Gastrocnemius medialis (tissue), 4 donors: ENCODE measurements at regions of chr2 and their contacts with region 1.

Region 1: GRCh38 chr2:199955339-199956261 is at the starts of genes MAIP1 and TYW5:
- DNase-seq: peak; percentile 68 to 72
- ATAC-seq: peak; percentile 98
- H3K4me3 ChIP-seq: peak within 1 kb of the TSS; percentile 83 to 94 (median 90)
- H3K27ac ChIP-seq: peak within 1 kb of the TSS; percentile 86 to 94 (median 90)
- H3K4me1 ChIP-seq: peaks cover 33% of the 10 kb centered on the region in 2 donors
- H3K27me3 ChIP-seq: no peaks in the 10 kb centered on the region
- CTCF ChIP-seq: peak in 3 of 5 experiments; percentile 34 to 43 (median 34)
- POLR2A ChIP-seq: peak; percentile 24 to 56
- total RNA-seq, gene MAIP1: 21.9 to 40.2 (median 26.6) TPM
- total RNA-seq, gene TYW5: 1.7 to 4.5 (median 3.8) TPM

Region 2: GRCh38 chr2:199911052-199911876 is 44.3 kb before region 1 on chr2 and contains the start of gene C2orf69:
- in situ Hi-C with region 1: no loop called
- intact Hi-C with region 1: loop called (anchors 1 kb)
- DNase-seq: peak; percentile 95 to 96
- ATAC-seq: peak; percentile 97
- H3K4me3 ChIP-seq: peak within 1 kb of the TSS; percentile 89 to 99 (median 90)
- H3K27ac ChIP-seq: peak within 1 kb of the TSS; percentile 96 to 100 (median 96)
- H3K4me1 ChIP-seq: peaks cover 15 to 32% of the 10 kb centered on the region in 2 donors
- H3K27me3 ChIP-seq: no peaks in the 10 kb centered on the region
- CTCF ChIP-seq: peak in 2 of 5 experiments; percentile 15 to 16
- POLR2A ChIP-seq: peak; percentile 84 to 85
- total RNA-seq, gene C2orf69: 5.5 to 11.4 (median 9.3) TPM

Region 3: GRCh38 chr2:200677721-200678585 is 722.4 kb after region 1 on chr2:
- in situ Hi-C with region 1: loop called in 1 of 4 experiments (anchors 25 kb)
- intact Hi-C with region 1: no loop called
- DNase-seq: no peak
- ATAC-seq: peak in 1 of 2 donors; percentile 31
- H3K4me3 ChIP-seq: no peak overlapping the region
- H3K27ac ChIP-seq: no peak overlapping the region
- H3K4me1 ChIP-seq: no peaks in the 10 kb centered on the region
- H3K27me3 ChIP-seq: no peaks in the 10 kb centered on the region
- CTCF ChIP-seq: no peak
- POLR2A ChIP-seq: no peak